PC-9 (cell line): ENCODE measurements at regions of chr6 and their contacts with region 1.

Region 1: GRCh38 chr6:38234934-38235682 is 404.6 kb downstream of the BTBD9 start:
- DNase-seq: no peak
- H3K4me3 ChIP-seq: no peak overlapping the region
- H3K27ac ChIP-seq: no peak overlapping the region
- H3K4me1 ChIP-seq: peaks cover 33% of the 10 kb centered on the region
- H3K27me3 ChIP-seq: no peaks in the 10 kb centered on the region
- CTCF ChIP-seq: no peak

Region 2: DNA sequence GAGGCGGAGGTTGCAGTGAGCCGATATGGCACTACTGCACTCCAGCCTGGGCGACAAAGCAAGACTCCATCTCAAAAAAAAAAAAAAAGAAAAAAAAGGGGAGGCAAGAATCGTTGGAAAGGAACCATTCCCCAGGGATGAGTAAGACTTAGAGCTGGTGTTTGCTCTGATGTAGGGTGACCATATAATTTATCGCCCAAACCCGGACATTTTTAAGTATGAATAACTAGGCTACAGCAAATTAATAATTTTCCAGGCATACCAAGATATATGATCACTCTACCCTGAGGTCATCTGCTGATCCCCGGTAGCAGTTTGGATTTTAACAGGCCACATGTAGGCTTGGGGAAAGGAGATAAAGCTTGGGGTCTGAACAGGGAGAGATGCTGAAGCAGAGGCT is 143.7 kb after region 1 on chr6:
- CTCF ChIA-PET with region 1: no interaction called
- POLR2A ChIA-PET with region 1: no interaction called
- intact Hi-C with region 1: no loop called
- DNase-seq: no peak
- H3K4me3 ChIP-seq: no peak overlapping the region
- H3K27ac ChIP-seq: no peak overlapping the region
- H3K4me1 ChIP-seq: no peaks in the 10 kb centered on the region
- H3K27me3 ChIP-seq: no peaks in the 10 kb centered on the region
- CTCF ChIP-seq: no peak

Region 3: DNA sequence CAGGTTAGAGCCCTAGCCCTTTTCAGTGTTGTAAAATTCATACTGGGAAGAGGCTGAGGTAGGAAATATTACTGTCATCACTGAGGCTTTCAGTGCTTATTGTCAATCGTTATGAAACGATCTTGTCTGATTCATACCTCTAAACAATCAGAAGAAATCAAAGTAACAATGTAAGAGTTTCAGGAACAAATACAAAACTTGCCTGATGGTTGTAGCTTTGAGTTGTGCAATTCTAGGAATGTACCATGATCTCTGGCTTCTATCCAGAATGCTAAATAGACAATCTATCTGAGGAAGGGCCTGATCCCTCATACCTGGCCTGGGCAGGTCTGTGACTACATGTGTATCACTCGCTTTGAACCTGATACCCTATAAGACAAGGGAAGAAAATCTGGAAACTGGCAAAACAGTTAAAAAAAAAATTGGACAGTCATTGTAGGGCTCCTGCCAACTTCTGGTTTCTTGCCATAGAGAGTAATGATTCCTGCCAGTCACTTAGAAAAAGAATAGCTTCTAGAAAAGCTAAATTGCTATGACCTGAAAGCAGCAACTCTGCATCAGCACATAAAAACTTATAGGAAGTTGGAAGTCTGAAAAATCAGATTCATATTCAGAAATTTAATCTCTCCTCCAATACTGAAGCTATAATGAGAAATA is 169.9 kb after region 1 on chr6:
- CTCF ChIA-PET with region 1: no interaction called
- POLR2A ChIA-PET with region 1: interaction called, 13 read pairs
- intact Hi-C with region 1: no loop called
- DNase-seq: peak; percentile 63 to 91
- H3K4me3 ChIP-seq: peak overlapping the region; percentile 21; the same call in 1 of the 2 replicates
- H3K27ac ChIP-seq: peak overlapping the region; percentile 70
- H3K4me1 ChIP-seq: peaks cover 36% of the 10 kb centered on the region
- H3K27me3 ChIP-seq: no peaks in the 10 kb centered on the region
- CTCF ChIP-seq: no peak